Heart left ventricle (tissue), 16 donors: ENCODE measurements at regions of chr3 and their contacts with region 1.

Region 1: DNA sequence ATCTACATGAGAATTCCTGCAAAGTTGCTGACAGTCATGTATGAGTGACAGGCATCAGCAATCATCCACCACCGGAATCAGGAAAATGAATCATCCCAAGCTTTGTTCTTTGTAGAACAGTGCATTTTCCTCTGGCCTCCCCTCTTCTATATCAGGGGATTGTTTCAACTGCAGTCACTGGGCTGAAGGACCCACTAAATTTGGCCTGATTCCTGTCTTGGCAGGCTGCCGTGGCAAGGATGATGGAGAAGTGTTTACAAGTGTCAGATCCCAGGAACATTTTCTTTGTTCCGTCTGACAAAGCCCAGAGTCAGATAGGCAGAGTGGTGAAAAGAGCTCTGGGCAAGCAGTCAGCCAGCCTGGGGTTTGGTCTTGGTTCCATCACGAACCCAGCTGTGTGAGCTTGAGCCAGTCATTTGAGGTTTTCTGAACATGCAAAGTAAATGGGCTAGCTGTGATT is 175.1 kb upstream of the TSC22D2 start:
- DNase-seq: peak; percentile 72 to 90 (median 84)
- ATAC-seq: peak; percentile 95 to 98 (median 97)
- H3K4me3 ChIP-seq: no peak overlapping the region
- H3K27ac ChIP-seq: peak overlapping the region in 10 of 12 donors; percentile 0 to 61 (median 42)
- H3K4me1 ChIP-seq: peaks cover 0 to 39% (median 12%) of the 10 kb centered on the region in 12 donors
- H3K27me3 ChIP-seq: no peaks in the 10 kb centered on the region
- CTCF ChIP-seq: no peak
- POLR2A ChIP-seq: no peak

Region 2: DNA sequence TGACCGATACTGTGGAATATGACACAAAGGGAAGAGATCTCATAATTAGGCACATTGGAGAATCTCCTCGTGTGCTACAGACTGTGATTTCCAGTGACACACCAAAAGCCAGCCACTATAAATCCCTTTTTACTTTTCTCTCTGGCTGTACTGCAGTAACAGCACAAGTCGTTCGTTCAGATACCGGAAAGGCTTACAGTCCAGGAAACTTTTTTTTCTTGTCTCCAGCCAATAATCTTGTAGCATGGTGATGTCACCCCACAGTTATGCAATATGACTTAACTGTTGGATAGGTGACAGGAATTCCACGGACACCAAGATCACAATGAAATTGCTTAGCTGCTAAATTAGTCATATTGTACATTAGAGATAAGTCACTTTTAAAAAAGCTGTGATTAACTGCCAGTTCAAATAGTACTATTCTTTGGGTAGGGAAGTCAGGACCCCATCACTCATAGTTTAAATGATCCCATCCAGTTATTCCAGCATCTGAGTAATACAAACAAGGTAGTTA is 138.8 kb after region 1 on chr3:
- intact Hi-C with region 1: loop called in 1 of 10 experiments (anchors 5 kb)
- DNase-seq: peak in 3 of 5 donors; percentile 30 to 80 (median 75)
- ATAC-seq: peak; percentile 94 to 96 (median 95)
- H3K4me3 ChIP-seq: peak overlapping the region in 11 of 12 donors; percentile 11 to 41 (median 28)
- H3K27ac ChIP-seq: peak overlapping the region; percentile 76 to 95 (median 86)
- H3K4me1 ChIP-seq: peaks cover 6 to 40% (median 24%) of the 10 kb centered on the region in 12 donors
- H3K27me3 ChIP-seq: no peaks in the 10 kb centered on the region
- CTCF ChIP-seq: no peak
- POLR2A ChIP-seq: peak in 1 of 2 donors; percentile 32

Region 3: DNA sequence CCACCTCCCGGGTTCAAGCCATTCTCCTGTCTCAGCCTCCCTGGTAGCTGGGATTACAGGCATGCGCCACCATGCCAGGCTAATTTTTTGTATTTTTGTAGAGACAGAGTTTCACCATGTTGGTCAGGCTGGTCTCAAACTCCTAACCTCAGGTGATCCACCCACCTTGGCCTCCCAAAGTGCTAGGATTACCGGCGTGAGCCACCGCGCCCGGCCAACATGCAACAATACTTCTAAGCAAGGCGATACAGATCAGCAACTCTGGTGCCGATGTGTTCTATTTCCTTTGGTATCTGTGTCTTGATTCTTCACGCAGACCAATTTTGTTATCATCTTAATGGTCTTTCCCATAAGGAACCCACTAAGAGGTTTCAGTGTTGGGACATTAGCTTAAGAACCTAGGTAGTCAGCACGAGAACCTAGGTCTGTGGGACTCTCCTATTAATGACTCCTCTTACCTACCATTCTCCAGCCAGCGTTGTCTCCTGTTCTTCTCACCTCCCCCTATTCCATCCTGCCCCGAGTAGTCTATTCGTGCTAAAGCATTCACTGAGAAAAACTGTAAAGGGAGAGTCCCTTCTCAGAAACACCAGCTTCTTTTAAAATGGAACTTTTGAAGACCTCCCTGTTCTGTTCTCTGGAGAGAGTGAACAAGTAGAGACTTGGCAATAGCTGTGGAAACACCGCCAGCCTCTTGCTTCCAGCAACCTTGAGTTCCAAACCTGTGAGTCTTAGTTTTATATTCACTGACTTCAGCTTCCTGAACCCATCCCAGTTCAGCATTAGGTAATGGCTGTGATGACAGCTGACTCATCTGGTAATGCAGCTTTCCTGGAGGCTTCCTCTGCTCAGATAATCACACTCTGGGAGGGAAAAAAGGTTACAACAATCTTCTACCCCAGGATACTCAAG is 236.3 kb after region 1 on chr3:
- intact Hi-C with region 1: no loop called
- DNase-seq: peak in 1 of 5 donors; percentile 69
- ATAC-seq: peak in 3 of 4 donors; percentile 64 to 94 (median 83)
- H3K4me3 ChIP-seq: no peak overlapping the region
- H3K27ac ChIP-seq: peak overlapping the region in 1 of 12 donors; percentile 46
- H3K4me1 ChIP-seq: peaks cover 0 to 11% (median 0%) of the 10 kb centered on the region in 12 donors
- H3K27me3 ChIP-seq: no peaks in the 10 kb centered on the region
- CTCF ChIP-seq: no peak
- POLR2A ChIP-seq: no peak